ENCODE measurements at regions of chr4 and their contacts with region 1.

Region 1: DNA sequence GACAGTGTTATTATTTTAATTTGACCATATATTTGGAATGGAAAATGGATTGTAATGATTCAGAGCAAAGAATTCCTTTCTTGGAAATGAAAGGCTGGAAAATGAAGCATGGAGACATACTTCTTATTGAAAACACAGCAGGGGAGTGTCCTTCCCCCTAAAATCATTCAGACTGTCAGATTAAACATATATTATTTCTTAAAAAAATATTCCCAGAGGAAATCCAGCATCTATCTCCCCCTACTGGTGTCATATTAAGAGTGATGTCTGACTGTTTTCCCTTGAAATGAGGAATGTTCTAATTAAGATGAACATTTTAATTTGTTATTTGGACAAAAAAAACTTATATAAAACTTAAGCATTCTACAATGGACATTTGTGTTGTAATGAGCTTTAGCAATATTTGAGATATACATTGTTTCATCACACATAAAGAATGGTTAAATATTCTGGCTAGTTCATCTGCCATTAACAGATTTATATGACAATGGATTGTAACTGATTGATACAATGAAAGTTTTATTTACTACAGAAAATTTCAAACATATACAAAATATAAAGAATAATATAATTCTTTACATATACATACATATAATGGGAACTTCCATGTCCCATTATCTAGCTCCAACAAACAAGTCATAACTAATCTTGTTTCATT is 264.6 kb downstream of the SPRY1 start:
- DNase-seq: no peak
- ATAC-seq: no peak

Region 2: DNA sequence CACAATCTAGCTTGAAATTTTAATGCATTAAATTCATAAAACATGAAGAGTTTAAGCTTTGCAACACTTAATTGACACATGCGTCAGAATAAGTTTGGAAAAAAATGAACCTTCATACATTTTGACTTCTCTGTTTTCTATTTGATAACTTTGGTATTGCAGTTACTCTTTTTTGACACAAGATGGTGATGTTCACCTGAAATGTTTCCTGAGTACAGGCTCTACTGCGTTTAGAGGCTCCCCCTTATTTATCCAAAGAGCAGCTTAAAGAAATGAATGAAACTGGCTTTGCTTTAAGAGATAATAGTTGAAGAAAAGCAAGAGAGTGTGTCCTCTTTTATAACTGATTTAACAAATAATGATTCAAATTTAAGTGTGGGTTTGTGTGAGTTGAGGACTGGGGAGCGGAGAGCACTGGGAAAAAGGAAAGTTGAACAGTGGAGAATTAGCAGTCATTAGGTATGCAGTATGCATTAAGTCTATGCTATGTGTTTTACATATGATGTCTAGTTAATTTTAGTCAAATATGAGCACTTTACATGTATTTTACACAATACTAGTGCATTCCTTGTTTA is 558.2 kb before region 1 on chr4:
- intact Hi-C with region 1: loop called in 1 of 2 experiments (anchors 10 kb)
- DNase-seq: no peak
- ATAC-seq: peak; percentile 61

Region 3: GRCh38 chr4:123524958-123525628 is 136.1 kb before region 1 on chr4:
- intact Hi-C with region 1: no loop called
- DNase-seq: no peak
- ATAC-seq: no peak

Region 4: GRCh38 chr4:123893011-123893981 is 232.1 kb after region 1 on chr4:
- intact Hi-C with region 1: no loop called
- DNase-seq: no peak
- ATAC-seq: no peak